ENCODE measurements at regions of chr6 and their contacts with region 1.

Region 1: GRCh38 chr6:150417899-150418826 is 49.4 kb downstream of the IYD start:
- DNase-seq: peak; percentile 27
- H3K4me3 ChIP-seq: peak overlapping the region in 3 of 4 donors; percentile 19 to 51 (median 25)
- H3K27ac ChIP-seq: peak overlapping the region; percentile 40 to 56 (median 48)
- H3K4me1 ChIP-seq: peaks cover 0 to 13% (median 4%) of the 10 kb centered on the region in 4 donors
- H3K27me3 ChIP-seq: no peaks in the 10 kb centered on the region
- CTCF ChIP-seq: peak; percentile 75 to 79 (median 78)
- EP300 ChIP-seq: no peak
- POLR2A ChIP-seq: no peak

Region 2: GRCh38 chr6:150478651-150479545 is 60.7 kb after region 1 on chr6:
- in situ Hi-C with region 1: no loop called
- intact Hi-C with region 1: loop called (anchors 1 kb)
- DNase-seq: no peak
- H3K4me3 ChIP-seq: no peak overlapping the region
- H3K27ac ChIP-seq: no peak overlapping the region
- H3K4me1 ChIP-seq: no peaks in the 10 kb centered on the region
- H3K27me3 ChIP-seq: no peaks in the 10 kb centered on the region
- CTCF ChIP-seq: no peak
- EP300 ChIP-seq: no peak
- POLR2A ChIP-seq: no peak

Region 3: DNA sequence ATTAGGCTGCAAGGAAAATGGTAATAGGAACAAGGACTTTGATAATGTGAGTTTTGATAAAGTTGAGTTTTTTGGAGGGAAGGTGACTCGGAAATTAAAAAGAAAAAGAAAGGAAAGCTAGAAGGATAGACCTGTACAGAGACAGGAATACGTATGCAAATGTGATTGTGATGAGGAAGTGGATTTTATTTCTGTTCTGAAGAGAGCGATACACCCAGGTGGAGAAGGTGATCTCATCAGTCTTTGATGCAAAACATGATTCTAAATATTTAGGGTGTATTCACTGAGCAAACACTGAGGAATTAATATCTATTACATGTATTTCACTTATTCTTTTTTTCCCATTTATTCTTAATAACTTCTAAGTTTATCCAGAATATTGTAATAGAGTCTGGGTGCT is 172.3 kb after region 1 on chr6:
- in situ Hi-C with region 1: loop called in 1 of 4 experiments (anchors 5 kb)
- intact Hi-C with region 1: loop called (anchors 5 kb)
- DNase-seq: no peak
- H3K4me3 ChIP-seq: no peak overlapping the region
- H3K27ac ChIP-seq: peak overlapping the region in 1 of 4 donors; percentile 32
- H3K4me1 ChIP-seq: peaks cover 0 to 21% (median 10%) of the 10 kb centered on the region in 4 donors
- H3K27me3 ChIP-seq: no peaks in the 10 kb centered on the region
- CTCF ChIP-seq: no peak
- EP300 ChIP-seq: no peak
- POLR2A ChIP-seq: no peak

Region 4: DNA sequence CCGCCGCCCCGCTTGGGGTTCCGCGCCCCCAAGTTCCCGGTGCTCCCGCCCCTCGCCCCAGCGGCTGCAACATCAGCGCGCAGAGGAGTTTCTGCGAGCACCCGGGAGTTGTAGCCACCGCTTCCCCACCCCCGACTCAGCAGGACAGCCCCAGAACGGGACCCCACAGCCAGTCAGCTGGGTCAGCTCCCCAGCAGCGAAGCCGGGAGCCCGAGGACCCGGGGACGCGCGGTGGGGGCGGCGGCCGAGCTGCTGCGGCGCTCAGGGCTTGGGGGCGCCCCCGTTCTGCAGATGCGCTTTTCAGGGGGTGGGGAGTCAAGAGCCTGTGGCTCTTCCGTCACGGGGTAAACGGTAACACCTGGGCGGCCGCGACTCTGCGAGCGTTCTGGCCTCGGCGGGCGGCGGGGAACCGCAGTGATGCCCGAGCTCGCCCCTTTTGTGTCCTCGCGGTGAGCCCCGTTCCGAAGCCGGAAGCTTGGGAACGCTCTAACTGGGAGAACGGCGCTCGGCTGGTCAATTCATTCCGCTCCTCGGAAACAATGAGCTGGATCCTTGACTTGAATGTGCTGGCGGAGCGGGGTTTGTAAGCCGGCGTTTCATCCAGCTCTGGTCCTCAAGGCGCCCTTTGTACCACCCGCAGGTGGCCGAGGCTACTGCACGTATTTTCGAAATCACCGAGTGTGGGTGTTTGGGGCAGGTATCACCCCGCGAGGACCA is 182.3 kb after region 1 on chr6:
- in situ Hi-C with region 1: loop called in 1 of 4 experiments (anchors 5 kb)
- intact Hi-C with region 1: no loop called
- DNase-seq: peak; percentile 83
- H3K4me3 ChIP-seq: peak overlapping the region; percentile 63 to 91 (median 78)
- H3K27ac ChIP-seq: peak overlapping the region; percentile 85 to 96 (median 94)
- H3K4me1 ChIP-seq: peaks cover 0 to 32% (median 6%) of the 10 kb centered on the region in 4 donors
- H3K27me3 ChIP-seq: no peaks in the 10 kb centered on the region
- CTCF ChIP-seq: peak; percentile 48 to 80 (median 61)
- EP300 ChIP-seq: no peak
- POLR2A ChIP-seq: peak; percentile 57

Region 5: DNA sequence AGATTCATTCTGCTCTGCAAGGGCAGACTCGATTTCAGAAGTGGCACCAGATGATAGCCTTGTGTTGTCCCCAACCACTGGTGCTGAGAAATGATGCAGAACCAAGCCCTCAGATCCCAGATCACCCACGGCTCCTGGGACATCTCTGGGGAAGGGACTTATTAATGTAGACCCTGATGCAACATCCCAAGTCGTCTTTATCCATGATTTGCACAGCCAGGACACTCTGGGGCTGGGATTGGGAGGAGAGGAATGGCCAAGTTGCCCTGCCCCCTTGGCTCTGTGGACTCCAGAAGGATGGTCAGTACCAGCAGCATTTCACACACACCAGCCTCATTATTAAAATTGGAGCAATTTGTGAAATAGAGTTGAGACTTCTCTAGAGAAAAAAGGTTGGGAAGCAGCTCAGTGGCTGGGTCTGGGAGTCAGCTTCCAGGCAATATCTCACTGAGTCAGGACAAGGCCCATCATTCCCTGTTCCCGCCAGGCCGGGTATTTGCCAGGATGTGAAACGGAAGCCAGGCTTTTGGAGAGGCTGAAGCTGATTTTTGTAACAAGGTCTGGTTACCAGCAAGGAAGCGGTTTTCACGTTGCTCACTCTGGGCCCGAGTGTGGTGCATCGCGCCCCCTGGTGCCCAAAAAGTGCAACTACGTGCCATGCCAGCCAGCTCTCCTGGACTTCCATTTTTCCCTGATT is 905.8 kb after region 1 on chr6:
- in situ Hi-C with region 1: loop called in 1 of 4 experiments (anchors 25 kb)
- intact Hi-C with region 1: no loop called
- DNase-seq: peak; percentile 83
- H3K4me3 ChIP-seq: no peak overlapping the region
- H3K27ac ChIP-seq: peak overlapping the region; percentile 68 to 85 (median 74)
- H3K4me1 ChIP-seq: peaks cover 11 to 22% (median 20%) of the 10 kb centered on the region in 4 donors
- H3K27me3 ChIP-seq: peaks cover 26% of the 10 kb centered on the region
- CTCF ChIP-seq: peak; percentile 96 to 98 (median 97)
- EP300 ChIP-seq: peak; percentile 87
- POLR2A ChIP-seq: no peak